PC-3 (cell line): ENCODE measurements at regions of chr20 and their contacts with region 1.

Region 1: GRCh38 chr20:11544029-11544678 is 373.5 kb upstream of the BTBD3 start:
- DNase-seq: peak; percentile 94
- ATAC-seq: peak; percentile 91
- H3K4me3 ChIP-seq: peak overlapping the region; percentile 55
- H3K27ac ChIP-seq: no peak overlapping the region
- H3K4me1 ChIP-seq: peaks cover 11% of the 10 kb centered on the region
- H3K27me3 ChIP-seq: no peaks in the 10 kb centered on the region
- CTCF ChIP-seq: peak; percentile 90

Region 2: DNA sequence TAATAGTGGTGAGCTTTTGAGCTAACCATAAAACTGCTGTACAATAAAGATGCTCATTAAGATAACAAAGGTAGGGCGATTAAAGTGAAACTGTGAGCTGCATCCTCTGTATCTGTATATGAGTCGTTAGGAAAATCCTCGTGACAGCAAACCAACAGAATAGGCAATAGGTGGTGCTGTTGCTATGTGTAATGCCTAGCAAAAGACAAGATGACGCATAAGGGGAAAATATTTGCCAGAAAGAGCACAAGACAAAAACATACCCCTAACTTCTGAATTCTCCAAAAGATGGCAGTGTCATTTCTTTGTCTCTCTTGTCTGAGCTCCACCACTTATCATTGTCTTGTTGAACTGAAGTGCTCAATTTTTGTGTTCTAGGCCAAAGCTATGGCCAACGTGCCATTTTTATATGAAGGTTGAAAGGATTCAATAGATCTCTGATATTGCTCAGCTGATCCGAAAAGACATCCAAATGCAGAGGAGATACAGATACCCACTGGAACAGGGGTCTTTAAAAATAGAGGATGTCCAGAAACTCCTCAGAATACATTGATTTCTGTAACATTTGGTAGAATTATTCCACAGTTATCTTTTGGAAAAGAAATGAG is 1565.7 kb before region 1 on chr20:
- CTCF ChIA-PET with region 1: no interaction called
- POLR2A ChIA-PET with region 1: no interaction called
- intact Hi-C with region 1: loop called (anchors 2 kb)
- DNase-seq: peak; percentile 92
- ATAC-seq: peak; percentile 92
- H3K4me3 ChIP-seq: peak overlapping the region; percentile 34; the same call in 1 of the 2 replicates
- H3K27ac ChIP-seq: no peak overlapping the region
- H3K4me1 ChIP-seq: no peaks in the 10 kb centered on the region
- H3K27me3 ChIP-seq: peaks cover 26% of the 10 kb centered on the region
- CTCF ChIP-seq: peak; percentile 98

Region 3: GRCh38 chr20:10427060-10427692 is 1117.0 kb before region 1 on chr20:
- CTCF ChIA-PET with region 1: no interaction called
- POLR2A ChIA-PET with region 1: no interaction called
- intact Hi-C with region 1: loop called (anchors 10 kb)
- DNase-seq: peak; percentile 67
- ATAC-seq: peak; percentile 60; the same call in 1 of the 2 replicates
- H3K4me3 ChIP-seq: no peak overlapping the region
- H3K27ac ChIP-seq: no peak overlapping the region
- H3K4me1 ChIP-seq: peaks cover 24% of the 10 kb centered on the region
- H3K27me3 ChIP-seq: no peaks in the 10 kb centered on the region
- CTCF ChIP-seq: peak; percentile 96

Region 4: DNA sequence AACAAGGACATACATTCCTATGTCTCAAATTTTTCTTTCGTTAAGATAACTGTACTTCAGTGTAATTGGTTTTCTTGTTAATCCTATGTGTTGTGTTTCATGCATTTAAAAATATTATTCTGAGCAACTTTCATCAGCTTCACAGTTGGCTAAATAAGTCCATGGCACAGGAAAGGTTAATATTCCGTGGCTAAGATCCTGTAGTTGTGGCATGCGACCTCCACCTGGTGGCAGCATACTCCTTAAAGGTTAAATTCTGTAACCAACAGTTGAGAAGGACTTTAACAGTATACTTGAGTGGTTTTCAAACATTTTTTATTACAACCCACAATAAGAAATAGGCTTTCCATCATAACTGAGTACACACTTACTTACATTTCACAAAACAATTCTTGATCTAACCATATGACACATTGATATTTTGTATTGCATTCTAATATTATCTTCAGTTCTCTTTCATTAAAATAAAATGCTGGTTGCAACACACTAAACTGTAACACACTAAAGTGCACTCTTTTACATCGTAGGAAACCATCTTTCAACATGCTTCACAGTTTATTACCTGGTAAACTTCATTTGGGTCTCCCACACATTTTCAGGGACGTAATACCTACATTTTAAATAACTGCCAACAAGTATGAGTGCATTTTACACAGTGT is 990.7 kb before region 1 on chr20:
- CTCF ChIA-PET with region 1: no interaction called
- POLR2A ChIA-PET with region 1: no interaction called
- intact Hi-C with region 1: loop called (anchors 1 kb)
- DNase-seq: peak; percentile 91
- ATAC-seq: peak; percentile 64
- H3K4me3 ChIP-seq: no peak overlapping the region
- H3K27ac ChIP-seq: peak overlapping the region; percentile 96
- H3K4me1 ChIP-seq: peaks cover 50% of the 10 kb centered on the region
- H3K27me3 ChIP-seq: no peaks in the 10 kb centered on the region
- CTCF ChIP-seq: peak; percentile 96

Region 5: GRCh38 chr20:11130554-11131166 is 413.5 kb before region 1 on chr20:
- CTCF ChIA-PET with region 1: no interaction called
- POLR2A ChIA-PET with region 1: no interaction called
- intact Hi-C with region 1: loop called (anchors 10 kb)
- DNase-seq: peak; percentile 70
- ATAC-seq: peak; percentile 52
- H3K4me3 ChIP-seq: no peak overlapping the region
- H3K27ac ChIP-seq: peak overlapping the region; percentile 60
- H3K4me1 ChIP-seq: peaks cover 29% of the 10 kb centered on the region
- H3K27me3 ChIP-seq: no peaks in the 10 kb centered on the region
- CTCF ChIP-seq: no peak

Region 6: DNA sequence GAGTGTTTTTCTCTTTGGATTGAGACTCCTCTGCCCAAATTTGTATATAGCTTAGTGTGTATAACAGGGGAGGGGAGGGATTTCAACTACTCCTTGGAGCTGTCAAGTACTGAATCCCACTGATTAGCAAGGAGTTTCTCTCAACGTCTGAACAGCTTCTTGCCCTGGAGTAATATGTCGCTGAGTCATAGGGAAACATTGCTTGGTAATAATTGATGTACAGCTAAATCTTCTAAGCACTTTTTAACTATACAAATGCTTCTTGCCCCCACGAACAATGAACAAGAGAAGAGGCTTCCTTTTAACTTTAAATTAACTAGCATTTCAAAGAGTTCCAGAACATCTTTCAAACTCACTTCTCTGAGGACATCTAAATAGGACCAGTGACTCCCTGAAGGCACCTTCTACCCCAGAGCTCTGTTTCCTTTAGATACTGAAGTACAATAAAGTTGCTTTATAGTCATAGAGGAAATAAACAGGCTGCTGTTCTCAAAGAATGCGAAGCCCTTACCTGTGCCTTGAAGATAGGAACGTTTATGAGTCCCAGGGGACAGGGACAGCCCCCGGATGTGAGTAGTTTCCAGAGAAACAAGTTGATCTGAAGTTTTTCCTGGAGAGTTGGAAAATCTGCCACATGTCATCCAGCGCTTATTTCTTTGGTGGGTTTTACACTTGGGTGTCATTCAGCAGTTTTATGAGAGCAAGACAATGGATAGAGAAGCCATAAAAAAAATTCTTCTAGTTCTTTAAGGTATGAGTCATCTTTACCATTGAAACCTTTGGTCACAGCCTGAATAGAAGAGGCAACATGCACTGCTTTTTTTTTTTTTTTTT is 89.0 kb before region 1 on chr20:
- CTCF ChIA-PET with region 1: no interaction called
- POLR2A ChIA-PET with region 1: no interaction called
- intact Hi-C with region 1: loop called (anchors 2 kb)
- DNase-seq: peak; percentile 97
- ATAC-seq: peak; percentile 80
- H3K4me3 ChIP-seq: peak overlapping the region; percentile 24; the same call in 1 of the 2 replicates
- H3K27ac ChIP-seq: peak overlapping the region; percentile 75
- H3K4me1 ChIP-seq: peaks cover 44% of the 10 kb centered on the region
- H3K27me3 ChIP-seq: no peaks in the 10 kb centered on the region
- CTCF ChIP-seq: no peak